ENCODE measurements at regions of chr11 and their contacts with region 1.

Region 1: DNA sequence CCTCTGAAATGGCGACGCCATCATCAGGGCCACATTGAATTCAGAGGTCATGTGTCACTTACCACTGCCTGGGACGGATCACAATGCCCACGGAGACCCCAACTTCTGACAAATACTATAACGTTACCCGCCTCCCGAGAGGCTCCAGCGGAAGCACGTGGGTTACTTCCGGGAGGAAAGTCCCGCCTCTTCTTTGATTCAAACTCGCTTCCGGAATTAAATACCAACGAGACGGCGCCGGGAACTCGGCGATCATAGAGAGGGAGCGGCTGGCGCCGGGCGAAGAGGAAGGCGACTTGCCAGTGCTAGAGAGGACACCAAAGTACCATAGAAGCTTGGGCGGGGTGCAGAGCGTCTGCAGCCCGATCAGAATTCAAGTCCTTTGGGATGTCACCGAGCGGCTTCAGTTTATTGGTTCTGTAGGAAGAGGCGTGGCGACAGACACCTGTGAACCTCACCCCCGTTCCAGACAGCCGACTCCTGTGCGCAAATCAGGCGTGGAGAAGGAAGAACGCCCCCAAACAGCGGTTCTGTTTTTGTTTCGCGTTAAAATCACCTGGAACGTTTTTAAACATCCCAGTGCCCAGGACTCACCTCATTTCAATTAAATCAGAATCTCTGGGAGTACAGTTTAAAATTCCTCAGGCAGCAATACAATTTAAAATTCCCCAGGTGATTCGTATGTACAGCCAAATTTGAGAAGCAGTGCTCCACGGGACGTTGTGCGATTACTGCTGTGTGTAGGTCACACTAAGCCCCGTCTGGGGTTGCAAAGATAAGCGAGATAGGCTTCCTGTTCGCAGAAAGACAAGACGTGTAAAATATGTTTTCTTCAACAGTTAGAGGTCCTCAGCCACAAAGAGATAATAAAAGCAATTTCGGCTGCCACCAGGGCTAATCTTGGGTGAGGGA is at the start of gene TIMM10:
- DNase-seq: peak; percentile 93 to 98 (median 96)
- H3K4me3 ChIP-seq: peak within 1 kb of the TSS; percentile 71 to 94
- H3K4me3 Mint-ChIP-seq: peak within 1 kb of the TSS; percentile 88 to 95 (median 90)
- H3K27ac ChIP-seq: peak within 1 kb of the TSS; percentile 88
- H3K27ac Mint-ChIP-seq: peak within 1 kb of the TSS; percentile 92 to 96 (median 95)
- H3K4me1 ChIP-seq: peaks cover 23% of the 10 kb centered on the region
- H3K4me1 Mint-ChIP-seq: peaks cover 9 to 34% (median 26%) of the 10 kb centered on the region in 4 donors
- H3K27me3 ChIP-seq: no peaks in the 10 kb centered on the region
- H3K27me3 Mint-ChIP-seq: no peaks in the 10 kb centered on the region
- total RNA-seq, gene TIMM10: 30.4 to 34.6 TPM

Region 2: DNA sequence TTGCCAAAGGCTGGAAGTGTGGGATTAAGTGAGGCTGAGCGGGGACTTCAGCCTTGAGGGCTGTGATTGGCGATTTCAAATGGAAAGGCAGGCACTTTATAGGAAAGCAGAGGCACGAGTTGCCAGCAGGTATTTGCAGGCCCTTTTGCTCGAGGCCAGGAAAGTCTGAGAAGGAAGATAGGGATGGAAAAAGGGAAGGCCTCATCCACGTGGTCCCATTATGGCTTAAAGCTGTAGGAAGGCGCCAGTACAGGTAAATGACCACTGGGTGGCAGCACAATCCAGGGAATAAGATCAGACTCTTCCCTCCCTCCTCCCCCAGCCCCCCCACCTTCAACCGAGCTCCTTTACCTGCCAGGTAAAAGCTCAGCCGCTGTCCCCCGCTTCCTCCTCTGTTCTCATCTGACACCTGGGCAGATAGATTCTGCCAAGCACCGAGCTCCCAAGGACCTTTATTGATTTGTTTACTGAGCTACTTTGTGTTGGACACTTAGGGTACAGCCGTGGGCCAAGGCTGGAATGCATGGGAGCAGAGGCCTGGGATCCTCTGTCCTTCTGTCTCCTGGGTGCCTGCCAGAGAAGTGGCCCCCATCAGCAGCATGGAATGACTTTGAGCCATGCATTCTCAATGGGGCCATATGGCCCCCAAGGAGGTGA is 185.2 kb before region 1 on chr11:
- CTCF ChIA-PET with region 1: interaction called, 31 read pairs
- POLR2A ChIA-PET with region 1: no interaction called
- intact Hi-C with region 1: loop called (anchors 1 kb)
- DNase-seq: peak; percentile 59 to 74 (median 63)
- H3K4me3 ChIP-seq: no peak overlapping the region
- H3K4me3 Mint-ChIP-seq: no peak overlapping the region
- H3K27ac ChIP-seq: no peak overlapping the region
- H3K27ac Mint-ChIP-seq: no peak overlapping the region
- H3K4me1 ChIP-seq: peaks cover 4% of the 10 kb centered on the region
- H3K4me1 Mint-ChIP-seq: peaks cover 0 to 5% (median 3%) of the 10 kb centered on the region in 4 donors
- H3K27me3 ChIP-seq: no peaks in the 10 kb centered on the region
- H3K27me3 Mint-ChIP-seq: peaks cover 2% of the 10 kb centered on the region in 2 donors

Region 3: DNA sequence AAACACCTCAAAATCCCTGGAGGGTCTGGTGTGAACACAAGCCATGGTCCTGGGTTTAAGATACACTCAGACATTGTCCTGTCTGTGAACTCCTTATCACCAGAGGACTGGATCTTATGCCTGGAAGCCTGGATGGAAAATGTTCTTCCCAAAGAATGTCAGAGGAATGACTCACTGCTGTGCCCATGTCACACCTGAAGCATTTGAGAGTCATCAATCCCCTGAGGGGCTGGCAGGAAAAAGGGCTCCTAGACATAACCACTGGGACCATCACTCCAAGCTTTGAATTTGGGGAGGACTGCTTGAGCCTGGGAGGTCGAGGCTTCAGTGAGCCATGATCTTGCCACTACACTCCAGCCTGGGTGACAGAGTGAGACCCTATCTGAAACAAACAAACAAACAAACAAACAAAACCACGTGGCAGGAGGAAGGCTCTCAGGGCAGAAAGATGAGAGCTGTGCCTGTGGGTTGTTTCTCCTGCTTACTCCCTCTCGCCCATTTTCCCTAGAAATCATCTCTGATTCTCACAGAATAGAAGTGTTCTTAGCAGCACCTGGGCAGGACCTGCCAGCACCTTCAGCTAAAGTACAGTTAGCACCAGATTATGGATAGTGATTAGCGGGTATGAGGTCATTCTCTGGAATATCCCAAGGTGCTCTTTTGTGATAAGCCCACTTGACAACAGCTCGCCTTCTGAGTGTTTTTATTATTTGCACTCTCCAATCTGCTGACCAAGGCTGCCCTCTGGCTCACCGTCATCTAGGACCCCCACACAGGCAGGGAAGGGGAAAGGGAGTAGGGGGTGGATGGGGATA is 128.5 kb before region 1 on chr11:
- CTCF ChIA-PET with region 1: no interaction called
- POLR2A ChIA-PET with region 1: no interaction called
- intact Hi-C with region 1: no loop called
- DNase-seq: no peak
- H3K4me3 ChIP-seq: no peak overlapping the region
- H3K4me3 Mint-ChIP-seq: no peak overlapping the region
- H3K27ac ChIP-seq: no peak overlapping the region
- H3K27ac Mint-ChIP-seq: no peak overlapping the region
- H3K4me1 ChIP-seq: peaks cover 8% of the 10 kb centered on the region
- H3K4me1 Mint-ChIP-seq: peaks cover 3 to 16% (median 10%) of the 10 kb centered on the region in 4 donors
- H3K27me3 ChIP-seq: no peaks in the 10 kb centered on the region
- H3K27me3 Mint-ChIP-seq: no peaks in the 10 kb centered on the region

Region 4: DNA sequence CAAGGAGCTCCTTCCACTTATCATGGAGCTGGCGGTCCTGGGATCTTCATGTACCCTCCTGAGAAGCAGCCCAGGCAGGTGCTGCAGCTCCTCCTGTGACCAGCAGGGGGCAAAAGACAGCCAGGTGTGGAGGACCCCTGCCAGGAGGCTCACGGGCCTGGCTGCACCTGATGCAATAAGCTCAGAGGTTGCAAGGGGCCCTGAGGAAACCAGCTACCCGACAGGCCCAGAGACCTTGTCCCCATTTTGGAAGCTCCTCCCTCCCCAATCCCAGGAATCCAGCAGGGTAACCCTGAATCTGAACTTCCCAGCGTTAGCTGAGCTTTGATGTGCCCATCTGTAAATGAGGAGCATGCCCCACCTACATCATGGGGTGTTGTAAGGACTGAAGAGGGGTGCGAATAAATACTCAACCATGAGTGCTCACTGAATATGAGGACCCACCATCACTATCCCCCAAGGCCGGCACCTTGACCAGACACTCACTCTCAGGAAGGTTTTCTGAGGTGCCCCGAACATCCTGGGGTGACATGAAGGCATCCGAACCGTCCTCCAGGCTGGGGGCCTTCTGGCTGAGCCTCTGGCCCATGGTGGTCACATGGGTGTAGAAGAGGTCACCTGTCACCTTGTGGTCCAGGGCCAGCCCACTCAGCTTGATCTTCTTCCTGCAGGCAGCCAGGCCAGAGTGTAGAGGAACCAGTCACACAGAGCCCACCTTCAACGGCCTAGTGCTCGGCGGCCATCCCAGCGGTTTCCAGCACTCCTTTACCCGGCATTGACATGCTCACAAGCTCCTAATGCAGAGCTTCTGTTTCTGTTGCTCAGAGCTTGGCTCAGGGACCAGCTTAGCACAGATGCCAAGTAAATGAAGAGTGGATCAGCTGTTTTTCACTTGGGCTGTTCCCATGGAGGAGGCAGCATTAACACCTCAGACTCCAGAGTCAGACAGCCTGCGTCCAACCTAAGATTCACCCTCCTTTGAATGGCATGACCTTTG is 37.0 kb before region 1 on chr11:
- CTCF ChIA-PET with region 1: interaction called, 848 read pairs
- POLR2A ChIA-PET with region 1: interaction called, 30 read pairs
- intact Hi-C with region 1: loop called (anchors 1 kb)
- DNase-seq: peak; percentile 64 to 74 (median 67)
- H3K4me3 ChIP-seq: no peak overlapping the region
- H3K4me3 Mint-ChIP-seq: no peak overlapping the region
- H3K27ac ChIP-seq: no peak overlapping the region
- H3K27ac Mint-ChIP-seq: no peak overlapping the region
- H3K4me1 ChIP-seq: no peaks in the 10 kb centered on the region
- H3K4me1 Mint-ChIP-seq: no peaks in the 10 kb centered on the region
- H3K27me3 ChIP-seq: no peaks in the 10 kb centered on the region
- H3K27me3 Mint-ChIP-seq: no peaks in the 10 kb centered on the region

Region 5: DNA sequence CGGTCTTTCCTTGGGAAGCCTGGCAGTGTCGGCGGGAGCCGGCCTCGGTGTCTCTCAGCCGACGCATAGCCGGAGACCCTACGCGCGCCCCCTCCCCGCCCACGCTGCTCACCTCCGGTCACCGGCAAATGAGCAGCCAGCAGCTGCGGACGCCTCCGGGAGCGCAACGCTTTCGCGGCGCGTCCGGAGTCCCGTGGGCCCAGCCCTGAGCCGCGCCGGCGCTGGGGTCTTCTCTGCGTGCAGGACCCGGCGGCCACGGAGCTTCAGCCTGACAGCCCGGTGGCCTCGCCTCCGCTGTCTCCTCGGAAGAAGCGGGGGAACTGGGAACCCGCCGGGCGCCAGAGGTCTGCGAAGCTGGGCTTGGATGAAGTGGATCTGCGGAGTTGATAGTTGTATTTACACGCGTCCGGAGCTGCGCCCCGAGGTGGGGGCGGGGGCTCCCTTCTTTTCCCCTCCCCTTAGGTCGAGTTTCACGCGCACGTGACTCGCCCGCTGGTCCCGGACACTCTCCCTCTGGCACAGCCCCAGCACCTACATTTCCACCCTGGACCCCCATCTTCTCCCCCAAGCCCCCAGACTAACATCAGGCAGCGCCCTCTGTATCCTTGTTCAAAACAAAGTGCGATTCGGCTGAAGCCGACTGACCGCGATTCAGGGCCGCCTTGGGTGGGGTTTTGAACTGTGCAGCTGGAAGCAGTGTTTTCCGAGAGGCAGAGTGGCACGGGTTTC is 15.4 kb before region 1 on chr11 and contains the start of gene SLC43A1:
- CTCF ChIA-PET with region 1: interaction called, 110 read pairs
- POLR2A ChIA-PET with region 1: interaction called, 23 read pairs
- intact Hi-C with region 1: loop called (anchors 1 kb)
- DNase-seq: peak in 2 of 5 donors; percentile 10 to 13
- H3K4me3 ChIP-seq: peak within 1 kb of the TSS; percentile 69 to 84
- H3K4me3 Mint-ChIP-seq: peak within 1 kb of the TSS; percentile 97 to 99 (median 98)
- H3K27ac ChIP-seq: peak within 1 kb of the TSS; percentile 43
- H3K27ac Mint-ChIP-seq: peak within 1 kb of the TSS; percentile 78 to 95 (median 89)
- H3K4me1 ChIP-seq: peaks cover 22% of the 10 kb centered on the region
- H3K4me1 Mint-ChIP-seq: peaks cover 17 to 32% (median 26%) of the 10 kb centered on the region in 4 donors
- H3K27me3 ChIP-seq: no peaks in the 10 kb centered on the region
- H3K27me3 Mint-ChIP-seq: no peaks in the 10 kb centered on the region
- total RNA-seq, gene SLC43A1: 18.1 to 21.7 TPM

Region 6: DNA sequence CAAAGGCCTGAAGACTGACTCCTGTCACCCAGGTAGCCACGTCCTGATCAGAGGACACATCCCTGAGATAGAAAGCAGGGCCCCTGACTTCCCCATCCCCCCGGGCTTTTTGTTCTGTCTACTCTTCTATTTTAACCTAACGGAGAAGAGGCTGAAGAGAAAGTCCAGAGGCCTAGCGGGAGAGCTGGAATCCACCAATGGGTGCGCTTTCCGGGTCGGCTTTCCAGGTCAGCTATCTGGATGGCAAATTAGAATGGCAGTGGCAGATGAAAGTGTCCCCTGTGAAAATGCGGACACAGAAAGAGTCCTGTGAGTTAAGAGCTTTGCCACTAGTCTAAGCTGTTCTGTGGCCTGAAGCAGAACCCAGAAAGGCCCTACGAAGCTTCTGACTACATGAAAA is 53.5 kb after region 1 on chr11:
- CTCF ChIA-PET with region 1: no interaction called
- POLR2A ChIA-PET with region 1: no interaction called
- intact Hi-C with region 1: no loop called
- DNase-seq: no peak
- H3K4me3 ChIP-seq: no peak overlapping the region
- H3K4me3 Mint-ChIP-seq: no peak overlapping the region
- H3K27ac ChIP-seq: no peak overlapping the region
- H3K27ac Mint-ChIP-seq: no peak overlapping the region
- H3K4me1 ChIP-seq: no peaks in the 10 kb centered on the region
- H3K4me1 Mint-ChIP-seq: peaks cover 0 to 4% (median under 1%) of the 10 kb centered on the region in 4 donors
- H3K27me3 ChIP-seq: no peaks in the 10 kb centered on the region
- H3K27me3 Mint-ChIP-seq: peaks cover 0 to 3% of the 10 kb centered on the region in 2 donors

Region 7: GRCh38 chr11:57598831-57599155 is 67.9 kb after region 1 on chr11:
- CTCF ChIA-PET with region 1: no interaction called
- POLR2A ChIA-PET with region 1: no interaction called
- intact Hi-C with region 1: no loop called
- DNase-seq: no peak
- H3K4me3 ChIP-seq: no peak overlapping the region
- H3K4me3 Mint-ChIP-seq: no peak overlapping the region
- H3K27ac ChIP-seq: no peak overlapping the region
- H3K27ac Mint-ChIP-seq: no peak overlapping the region
- H3K4me1 ChIP-seq: no peaks in the 10 kb centered on the region
- H3K4me1 Mint-ChIP-seq: no peaks in the 10 kb centered on the region
- H3K27me3 ChIP-seq: peaks cover 11% of the 10 kb centered on the region
- H3K27me3 Mint-ChIP-seq: peaks cover 28 to 36% of the 10 kb centered on the region in 2 donors

Region 8: DNA sequence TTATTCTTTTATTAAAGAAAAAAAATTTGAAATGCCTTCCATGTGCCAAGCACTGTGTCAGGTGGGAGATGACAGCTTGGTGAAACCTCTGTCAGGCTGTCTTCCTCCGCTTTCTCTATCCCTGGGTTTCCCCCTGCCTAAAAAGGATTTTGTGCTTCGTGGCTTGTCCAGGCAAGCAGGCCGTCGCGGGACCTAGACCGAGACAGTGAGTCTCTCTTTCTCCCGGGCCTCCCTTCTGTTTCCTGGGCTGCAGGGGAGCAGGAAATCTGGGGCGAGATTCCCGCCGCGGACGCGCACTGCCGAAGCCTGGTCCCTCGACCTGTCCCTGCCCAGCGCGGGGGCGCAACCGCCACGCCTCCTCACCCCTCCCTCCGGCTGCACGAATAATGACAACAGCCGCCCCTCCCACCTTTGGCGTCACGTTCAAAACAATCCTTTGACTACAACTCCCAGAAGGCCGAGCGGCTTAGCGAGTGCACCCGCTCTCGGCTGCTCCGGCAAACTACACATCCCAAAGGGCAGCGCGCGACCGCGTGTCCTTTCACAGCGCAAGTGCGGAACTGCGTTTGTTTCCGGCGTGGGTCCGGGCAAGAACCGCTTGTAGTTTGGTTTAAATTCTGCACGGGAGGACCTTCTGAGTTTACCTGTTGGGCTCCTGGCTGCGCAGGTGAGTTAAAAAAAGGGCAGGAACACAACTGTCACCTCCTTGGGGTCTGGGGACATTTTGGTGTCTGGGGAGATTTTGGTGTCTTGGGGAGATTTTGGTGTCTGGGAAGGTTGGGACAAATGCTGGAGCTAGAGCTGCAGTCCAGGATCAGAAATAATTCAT is 126.6 kb after region 1 on chr11 and contains the start of gene CLP1:
- CTCF ChIA-PET with region 1: no interaction called
- POLR2A ChIA-PET with region 1: interaction called, 4 read pairs
- intact Hi-C with region 1: loop called (anchors 1 kb)
- DNase-seq: peak; percentile 98 to 99 (median 98)
- H3K4me3 ChIP-seq: peak within 1 kb of the TSS; percentile 91 to 96
- H3K4me3 Mint-ChIP-seq: peak within 1 kb of the TSS; percentile 94 to 100 (median 98)
- H3K27ac ChIP-seq: peak within 1 kb of the TSS; percentile 84
- H3K27ac Mint-ChIP-seq: peak within 1 kb of the TSS; percentile 86 to 100 (median 97)
- H3K4me1 ChIP-seq: peaks cover 16% of the 10 kb centered on the region
- H3K4me1 Mint-ChIP-seq: peaks cover 15 to 30% (median 27%) of the 10 kb centered on the region in 4 donors
- H3K27me3 ChIP-seq: no peaks in the 10 kb centered on the region
- H3K27me3 Mint-ChIP-seq: no peaks in the 10 kb centered on the region
- total RNA-seq, gene CLP1: 14.1 to 16.0 TPM

Region 9: DNA sequence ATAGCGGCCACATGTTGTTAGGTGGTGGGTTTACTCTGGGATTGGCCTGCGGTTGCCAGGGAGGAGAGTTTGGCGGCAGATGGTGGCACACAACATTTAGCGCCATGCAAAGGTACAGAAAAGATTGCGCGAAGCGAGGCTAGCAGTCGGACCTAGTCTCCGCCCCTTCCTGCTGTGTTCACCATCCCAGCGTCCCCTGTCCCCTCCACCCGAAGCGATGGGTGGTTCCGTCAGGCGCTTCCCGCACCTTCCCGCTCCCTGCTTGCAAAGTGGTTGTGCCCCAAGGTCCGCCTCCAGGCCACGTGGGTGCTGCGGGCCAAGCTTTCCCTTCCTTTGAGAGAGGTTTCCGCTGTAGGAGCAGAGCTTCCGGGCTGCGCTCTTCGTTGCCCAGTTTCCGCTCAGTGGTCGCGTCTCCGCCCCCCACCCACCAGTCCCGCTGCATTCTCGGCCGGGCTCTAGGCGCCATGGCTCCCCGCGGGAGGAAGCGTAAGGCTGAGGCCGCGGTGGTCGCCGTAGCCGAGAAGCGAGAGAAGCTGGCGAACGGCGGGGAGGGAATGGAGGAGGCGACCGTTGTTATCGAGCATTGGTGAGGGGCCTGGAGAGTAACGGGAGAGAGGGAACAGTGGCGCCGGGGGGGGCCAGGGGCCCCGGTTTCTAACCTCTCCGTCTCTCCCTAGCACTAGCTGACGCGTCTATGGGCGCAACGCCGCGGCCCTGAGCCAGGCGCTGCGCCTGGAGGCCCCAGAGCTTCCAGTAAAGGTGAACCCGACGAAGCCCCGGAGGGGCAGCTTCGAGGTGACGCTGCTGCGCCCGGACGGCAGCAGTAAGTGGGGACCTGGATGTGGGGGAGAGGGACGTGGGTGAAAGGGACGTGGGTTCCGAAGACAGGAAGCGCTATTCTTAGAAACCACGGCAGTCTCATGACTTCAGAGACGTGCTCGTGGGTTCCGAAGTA is 210.6 kb after region 1 on chr11 and contains the start of gene SELENOH:
- CTCF ChIA-PET with region 1: interaction called, 4 read pairs
- POLR2A ChIA-PET with region 1: interaction called, 5 read pairs
- intact Hi-C with region 1: loop called (anchors 1 kb)
- DNase-seq: peak; percentile 90 to 96 (median 91)
- H3K4me3 ChIP-seq: peak within 1 kb of the TSS; percentile 77 to 80
- H3K4me3 Mint-ChIP-seq: peak within 1 kb of the TSS; percentile 90 to 100 (median 98)
- H3K27ac ChIP-seq: peak within 1 kb of the TSS; percentile 82
- H3K27ac Mint-ChIP-seq: peak within 1 kb of the TSS; percentile 96 to 100 (median 99)
- H3K4me1 ChIP-seq: peaks cover 26% of the 10 kb centered on the region
- H3K4me1 Mint-ChIP-seq: peaks cover 18 to 36% (median 28%) of the 10 kb centered on the region in 4 donors
- H3K27me3 ChIP-seq: no peaks in the 10 kb centered on the region
- H3K27me3 Mint-ChIP-seq: no peaks in the 10 kb centered on the region
- total RNA-seq, gene SELENOH: 102 to 113 TPM

Measured in CD4-positive, alpha-beta memory T cell (primary cell).